Motor neuron (in vitro differentiated cells): ENCODE measurements at regions of chr12 and their contacts with region 1.

Region 1: DNA sequence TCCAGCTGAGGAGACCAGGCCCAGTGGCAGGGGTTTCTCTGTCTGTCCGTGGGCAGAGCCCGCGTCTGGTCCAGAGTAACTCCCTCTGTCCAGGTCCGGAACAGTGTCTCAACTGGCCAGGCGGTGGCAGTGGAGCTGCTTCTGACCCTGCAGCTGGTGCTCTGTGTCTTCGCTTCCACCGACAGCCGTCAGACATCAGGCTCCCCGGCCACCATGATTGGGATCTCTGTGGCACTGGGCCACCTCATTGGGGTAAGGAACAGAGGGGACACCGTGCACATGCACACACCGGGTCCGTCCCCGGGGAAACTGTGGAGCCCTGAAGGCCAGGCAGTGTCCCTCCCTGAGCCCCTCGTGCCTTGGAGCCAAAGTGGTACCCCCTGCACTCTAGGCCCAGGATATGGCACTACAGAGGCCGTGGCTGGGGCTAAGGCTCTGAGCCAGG is 1.5 kb downstream of the AQP6 start:
- ATAC-seq: peak; percentile 43 to 88 (median 82)
- H3K4me3 ChIP-seq: no peak overlapping the region
- H3K27ac ChIP-seq: no peak overlapping the region
- H3K4me1 ChIP-seq: peaks cover 23 to 24% of the 10 kb centered on the region in 2 donors

Region 2: DNA sequence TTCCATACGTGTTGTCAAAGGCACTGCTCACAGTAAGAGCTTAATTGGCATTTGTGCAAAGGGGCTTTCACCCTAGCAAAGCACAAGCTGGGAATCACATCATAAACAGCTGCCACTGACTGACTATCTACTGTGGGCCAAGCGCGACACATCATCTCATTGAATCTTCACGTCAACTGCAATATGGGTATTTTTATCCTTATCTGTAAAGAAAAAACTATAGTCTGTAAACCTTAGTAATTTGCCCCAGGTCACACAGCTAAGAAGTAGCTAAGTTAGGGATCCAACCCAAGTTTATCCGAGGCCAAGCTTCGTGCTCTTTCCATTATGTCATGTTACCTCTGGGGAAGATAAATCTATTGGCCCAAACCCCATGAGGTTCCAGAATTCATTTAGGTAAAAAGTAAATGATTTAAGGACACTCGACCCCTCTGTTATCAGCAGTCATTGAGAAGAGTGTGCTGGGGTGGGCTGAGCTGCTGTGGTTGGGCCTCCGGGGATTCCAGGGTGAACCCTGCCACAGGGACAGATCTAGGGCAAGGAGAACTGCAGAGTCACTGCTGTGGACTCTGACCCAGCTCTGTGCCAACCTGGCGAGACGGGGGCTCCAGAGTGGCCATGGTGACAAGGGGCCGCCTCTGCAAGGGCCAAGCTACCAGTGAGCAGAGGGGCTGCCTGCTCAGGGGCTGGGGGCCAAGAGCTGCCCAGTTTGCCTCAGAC is 173.7 kb before region 1 on chr12:
- in situ Hi-C with region 1: no loop called
- ATAC-seq: no peak
- H3K4me3 ChIP-seq: no peak overlapping the region
- H3K27ac ChIP-seq: no peak overlapping the region
- H3K4me1 ChIP-seq: no peaks in the 10 kb centered on the region

Region 3: GRCh38 chr12:49872781-49873181 is 101.5 kb before region 1 on chr12:
- in situ Hi-C with region 1: no loop called
- ATAC-seq: no peak
- H3K4me3 ChIP-seq: no peak overlapping the region
- H3K27ac ChIP-seq: no peak overlapping the region
- H3K4me1 ChIP-seq: peaks cover 3 to 4% of the 10 kb centered on the region in 2 donors

Region 4: GRCh38 chr12:50055831-50056638 is 81.8 kb after region 1 on chr12:
- in situ Hi-C with region 1: loop called in 8 of 9 experiments (anchors 5 to 25 kb)
- ATAC-seq: peak in 4 of 8 experiments; percentile 3 to 25 (median 19)
- H3K4me3 ChIP-seq: peak overlapping the region in 1 of 5 donors; percentile 51
- H3K27ac ChIP-seq: no peak overlapping the region
- H3K4me1 ChIP-seq: peaks cover 20 to 23% of the 10 kb centered on the region in 2 donors